ENCODE measurements at regions of chr12 and their contacts with region 1.

Region 1: DNA sequence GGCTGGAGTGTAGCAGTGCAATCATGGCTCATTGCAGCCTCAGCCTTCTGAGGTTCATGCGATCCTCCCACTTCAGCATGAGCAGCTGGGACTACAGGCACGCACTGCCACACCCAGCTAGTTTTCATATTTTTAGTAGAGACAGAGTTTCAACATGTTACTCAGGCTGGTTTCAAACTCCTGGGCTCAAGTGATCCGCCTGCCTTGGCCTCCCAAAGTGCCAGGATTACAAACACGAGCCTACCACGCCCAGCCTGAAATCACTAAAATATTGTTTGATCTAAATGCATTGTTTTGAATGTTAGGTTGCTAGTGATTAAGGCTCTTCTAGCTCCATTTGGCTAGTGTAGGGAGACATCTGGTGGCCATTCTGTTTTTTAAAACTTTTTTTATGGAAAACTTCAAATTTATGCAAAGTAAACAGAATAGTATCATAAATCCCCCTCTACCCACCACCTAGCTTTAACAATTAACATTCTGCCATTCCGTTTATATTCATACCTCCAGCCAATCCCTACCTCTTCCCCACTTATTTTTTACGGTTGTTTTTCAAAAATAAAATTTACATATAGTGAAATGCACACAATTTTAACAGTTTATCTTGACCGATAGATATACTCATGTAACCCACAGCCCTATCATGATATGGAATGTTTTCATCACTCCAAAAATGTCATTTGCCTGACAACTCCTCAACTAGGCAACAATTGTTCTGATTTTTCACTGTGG is 37.8 kb downstream of the MYO1H start:
- DNase-seq: no peak
- ATAC-seq: peak; percentile 80

Region 2: GRCh38 chr12:109264095-109264942 is 121.2 kb before region 1 on chr12:
- intact Hi-C with region 1: loop called (anchors 5 kb)
- DNase-seq: peak; percentile 85
- ATAC-seq: peak; percentile 68

Measured in left ventricle myocardium superior (tissue), 1 donor.